ENCODE measurements at regions of chr3 and their contacts with region 1.

Region 1: GRCh38 chr3:52742418-52743041 is 28.2 kb downstream of the NEK4 start:
- DNase-seq: peak; percentile 44
- ATAC-seq: peak; percentile 76
- H3K4me3 ChIP-seq: no peak overlapping the region
- H3K27ac ChIP-seq: no peak overlapping the region
- H3K4me1 ChIP-seq: peaks cover 30% of the 10 kb centered on the region
- H3K27me3 ChIP-seq: no peaks in the 10 kb centered on the region
- CTCF ChIP-seq: peak; percentile 76
- EP300 ChIP-seq: no peak
- POLR2A ChIP-seq: no peak
- RAD21 ChIP-seq: peak; percentile 73

Region 2: DNA sequence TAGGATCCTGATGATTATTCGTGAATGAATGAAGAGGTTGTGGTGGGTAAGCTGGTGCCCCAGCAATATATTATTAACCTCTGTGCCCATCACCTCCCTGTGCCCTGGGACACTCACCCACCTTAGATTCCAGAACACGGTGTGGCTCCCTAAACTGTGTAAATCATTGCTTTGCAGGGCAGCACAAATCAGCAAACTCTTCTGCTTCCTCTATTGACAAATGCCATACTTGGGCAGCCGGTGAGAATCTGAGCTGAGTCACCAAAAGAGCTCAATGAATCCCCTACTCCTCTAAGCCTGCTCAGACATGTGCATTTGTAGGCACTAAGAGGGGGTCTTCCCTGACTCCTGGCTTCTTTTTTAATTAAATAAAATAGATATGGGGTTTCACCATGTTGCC is 190.4 kb before region 1 on chr3:
- CTCF ChIA-PET with region 1: no interaction called
- POLR2A ChIA-PET with region 1: no interaction called
- in situ Hi-C with region 1: no loop called
- intact Hi-C with region 1: no loop called
- DNase-seq: no peak
- ATAC-seq: no peak
- H3K4me3 ChIP-seq: no peak overlapping the region
- H3K27ac ChIP-seq: no peak overlapping the region
- H3K4me1 ChIP-seq: no peaks in the 10 kb centered on the region
- H3K27me3 ChIP-seq: no peaks in the 10 kb centered on the region
- CTCF ChIP-seq: no peak
- EP300 ChIP-seq: no peak
- POLR2A ChIP-seq: no peak
- RAD21 ChIP-seq: no peak

Region 3: DNA sequence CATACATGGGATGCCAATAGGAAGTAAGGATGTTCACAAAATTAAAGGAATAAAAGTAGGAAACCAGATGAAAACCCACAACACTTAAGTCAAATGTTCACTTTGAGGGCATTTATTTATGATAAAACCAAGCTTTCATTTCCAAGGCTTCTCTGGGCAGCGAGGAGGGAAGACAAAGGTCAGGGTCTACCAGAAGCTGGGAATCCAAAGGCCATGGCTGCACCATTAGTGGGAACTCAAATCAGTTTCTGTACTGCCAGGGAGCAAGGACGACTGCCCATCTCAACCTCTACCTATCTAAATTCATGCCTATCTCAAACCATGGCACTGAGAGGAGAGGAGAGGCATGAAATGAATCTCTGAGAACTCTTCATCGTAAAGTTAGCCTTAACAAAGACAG is 79.4 kb before region 1 on chr3:
- CTCF ChIA-PET with region 1: no interaction called
- POLR2A ChIA-PET with region 1: no interaction called
- in situ Hi-C with region 1: no loop called
- intact Hi-C with region 1: no loop called
- DNase-seq: no peak
- ATAC-seq: no peak
- H3K4me3 ChIP-seq: no peak overlapping the region
- H3K27ac ChIP-seq: no peak overlapping the region
- H3K4me1 ChIP-seq: peaks cover 5% of the 10 kb centered on the region; the same call in 1 of the 2 replicates
- H3K27me3 ChIP-seq: no peaks in the 10 kb centered on the region
- CTCF ChIP-seq: no peak
- EP300 ChIP-seq: no peak
- POLR2A ChIP-seq: no peak
- RAD21 ChIP-seq: no peak

Region 4: DNA sequence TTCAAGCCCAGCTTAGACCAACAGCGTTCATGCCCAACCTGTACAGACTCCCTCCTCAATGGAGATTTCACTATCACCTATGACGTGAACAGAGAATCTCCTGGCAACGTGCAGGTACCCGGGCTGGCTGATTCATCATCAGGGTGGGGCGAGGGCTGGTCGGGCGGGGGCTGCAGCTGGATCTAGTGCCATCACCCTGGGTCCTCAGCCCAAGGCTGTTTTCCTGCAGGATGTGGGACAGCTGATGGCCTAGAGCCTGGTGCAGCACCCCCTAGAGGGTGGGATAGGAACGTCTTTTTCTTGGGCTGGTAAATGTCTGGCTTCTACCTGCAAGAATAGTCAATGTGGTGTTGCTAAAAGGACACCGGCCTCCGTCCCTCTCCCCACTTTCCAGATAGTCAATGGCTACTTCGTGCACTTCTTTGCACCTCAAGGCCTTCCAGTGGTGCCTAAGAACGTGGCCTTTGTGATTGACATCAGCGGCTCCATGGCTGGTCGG is 56.5 kb after region 1 on chr3:
- CTCF ChIA-PET with region 1: interaction called, 29 read pairs
- POLR2A ChIA-PET with region 1: interaction called, 6 read pairs
- in situ Hi-C with region 1: no loop called
- intact Hi-C with region 1: loop called (anchors 1 kb)
- DNase-seq: peak; percentile 41
- ATAC-seq: peak; percentile 45
- H3K4me3 ChIP-seq: no peak overlapping the region
- H3K27ac ChIP-seq: no peak overlapping the region
- H3K4me1 ChIP-seq: peaks cover 51% of the 10 kb centered on the region
- H3K27me3 ChIP-seq: no peaks in the 10 kb centered on the region
- CTCF ChIP-seq: peak; percentile 74
- EP300 ChIP-seq: no peak
- POLR2A ChIP-seq: no peak
- RAD21 ChIP-seq: peak; percentile 55; the same call in 1 of the 2 replicates

Region 5: GRCh38 chr3:52820736-52821135 is 78.2 kb after region 1 on chr3:
- CTCF ChIA-PET with region 1: interaction called, 13 read pairs
- POLR2A ChIA-PET with region 1: no interaction called
- in situ Hi-C with region 1: loop called (anchors 5 kb)
- intact Hi-C with region 1: loop called (anchors 2 kb)
- DNase-seq: peak; percentile 51
- ATAC-seq: peak; percentile 77
- H3K4me3 ChIP-seq: no peak overlapping the region
- H3K27ac ChIP-seq: no peak overlapping the region
- H3K4me1 ChIP-seq: peaks cover 52% of the 10 kb centered on the region
- H3K27me3 ChIP-seq: no peaks in the 10 kb centered on the region
- CTCF ChIP-seq: peak; percentile 92
- EP300 ChIP-seq: no peak
- POLR2A ChIP-seq: no peak
- RAD21 ChIP-seq: peak; percentile 61

Region 6: DNA sequence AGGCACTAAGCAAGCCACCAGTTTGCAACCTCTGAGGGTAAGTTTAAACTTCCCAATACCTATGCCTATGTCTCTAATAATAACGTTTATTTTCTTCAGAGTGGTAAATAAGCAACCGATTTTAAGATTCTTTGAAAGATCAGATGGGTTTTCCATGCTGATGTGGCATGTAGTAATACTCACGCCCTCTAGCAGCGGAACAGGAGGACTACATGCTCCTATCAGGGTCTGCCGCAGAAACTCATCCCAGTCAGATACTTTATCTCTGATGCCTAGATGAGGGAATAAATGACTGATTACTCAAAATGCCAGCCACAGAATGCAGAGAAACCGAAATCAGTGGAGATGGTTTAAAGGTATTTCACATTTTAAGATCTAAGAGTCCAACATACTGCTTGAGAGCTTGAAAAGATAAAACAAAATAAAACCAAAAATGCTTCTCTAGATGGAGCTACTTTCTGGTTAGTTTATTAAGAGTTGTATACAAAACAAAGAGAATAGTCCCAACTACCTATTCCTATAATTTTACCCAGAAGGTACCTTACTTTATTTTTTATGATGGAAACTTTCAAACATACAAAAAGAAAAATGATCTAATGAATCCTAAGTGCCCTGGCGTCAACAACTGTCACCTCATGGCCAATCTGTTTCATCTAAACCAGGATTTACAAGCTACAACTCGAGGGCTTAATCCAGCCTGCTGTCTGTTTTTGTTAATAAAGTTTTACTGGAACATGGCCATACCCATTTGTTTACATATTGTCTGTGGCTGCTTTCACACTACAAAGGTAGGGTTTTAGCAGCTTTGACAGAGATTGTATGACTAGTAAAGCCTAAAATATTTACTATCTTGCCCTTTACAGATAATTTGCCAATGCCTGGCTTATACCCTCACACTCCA is 192.3 kb after region 1 on chr3:
- CTCF ChIA-PET with region 1: no interaction called
- POLR2A ChIA-PET with region 1: no interaction called
- in situ Hi-C with region 1: no loop called
- intact Hi-C with region 1: no loop called
- DNase-seq: peak; percentile 46
- ATAC-seq: peak; percentile 92
- H3K4me3 ChIP-seq: no peak overlapping the region
- H3K27ac ChIP-seq: no peak overlapping the region
- H3K4me1 ChIP-seq: peaks cover 6% of the 10 kb centered on the region; the same call in 1 of the 2 replicates
- H3K27me3 ChIP-seq: no peaks in the 10 kb centered on the region
- CTCF ChIP-seq: peak; percentile 81
- EP300 ChIP-seq: no peak
- POLR2A ChIP-seq: no peak
- RAD21 ChIP-seq: peak; percentile 26; the same call in 1 of the 2 replicates

Region 7: DNA sequence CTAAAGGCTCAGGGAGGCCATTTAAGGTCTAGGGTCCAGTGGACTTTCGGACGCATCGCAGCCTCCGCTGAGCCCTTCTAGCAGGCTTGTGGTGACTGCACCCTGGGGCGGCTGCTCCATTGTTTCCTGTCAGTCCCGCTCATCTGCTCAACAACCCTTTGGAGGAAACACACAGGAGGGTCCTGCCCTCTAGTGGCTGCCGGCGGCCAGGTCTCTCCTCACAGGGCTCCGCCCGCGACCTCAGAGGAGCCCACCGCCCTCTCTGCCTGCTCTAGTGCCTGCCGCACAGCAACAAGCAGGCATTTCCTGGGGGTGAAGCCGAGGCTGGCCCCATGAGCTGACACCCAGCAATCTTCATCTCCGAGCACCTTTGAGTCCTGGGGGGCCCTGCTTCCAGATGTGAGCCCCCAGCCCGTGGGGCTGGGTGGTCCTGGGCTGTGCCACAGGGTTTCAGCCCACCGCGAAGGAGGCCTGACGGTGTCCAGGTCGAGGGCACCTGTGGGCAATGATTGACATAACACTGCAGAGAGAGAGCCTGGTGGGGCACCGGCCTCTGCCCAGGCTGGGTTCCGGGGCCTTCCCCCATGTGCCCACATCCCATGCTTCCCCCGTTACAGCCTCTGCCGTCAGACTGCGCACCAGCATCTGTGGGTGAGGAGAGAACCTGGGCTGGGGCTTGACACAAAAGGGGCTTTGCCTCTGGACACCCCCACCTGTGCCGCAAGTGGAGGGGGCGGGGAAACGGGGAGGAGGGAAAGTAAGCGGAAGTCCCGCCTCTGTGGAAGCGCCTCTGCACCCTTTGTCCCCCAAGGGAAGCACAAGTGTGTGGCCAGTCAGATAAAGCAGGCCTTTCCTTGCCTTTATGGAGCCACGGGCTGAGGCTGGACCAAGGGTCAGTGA is 330.4 kb after region 1 on chr3:
- CTCF ChIA-PET with region 1: no interaction called
- POLR2A ChIA-PET with region 1: no interaction called
- in situ Hi-C with region 1: no loop called
- intact Hi-C with region 1: loop called (anchors 10 kb)
- DNase-seq: peak; percentile 81
- ATAC-seq: peak; percentile 93
- H3K4me3 ChIP-seq: peak overlapping the region; percentile 67 to 83 (median 70)
- H3K27ac ChIP-seq: peak overlapping the region; percentile 71
- H3K4me1 ChIP-seq: peaks cover 27% of the 10 kb centered on the region
- H3K27me3 ChIP-seq: peaks cover 0 to 1% of the 10 kb centered on the region in 2 experiments; a peak in 2 of 5 replicates
- CTCF ChIP-seq: peak; percentile 99
- EP300 ChIP-seq: no peak
- POLR2A ChIP-seq: peak; percentile 45 to 82; a peak in 3 of 4 replicates
- RAD21 ChIP-seq: peak; percentile 91